Dendritic cell treated with granulocyte-macrophage colony-stimulating factor and Interleukin-4, amounts not matched to agents 40 ng/mL and 50 ng/mL, for 4 days (primary cell): ENCODE measurements at regions of chr22 and their contacts with region 1.

Region 1: DNA sequence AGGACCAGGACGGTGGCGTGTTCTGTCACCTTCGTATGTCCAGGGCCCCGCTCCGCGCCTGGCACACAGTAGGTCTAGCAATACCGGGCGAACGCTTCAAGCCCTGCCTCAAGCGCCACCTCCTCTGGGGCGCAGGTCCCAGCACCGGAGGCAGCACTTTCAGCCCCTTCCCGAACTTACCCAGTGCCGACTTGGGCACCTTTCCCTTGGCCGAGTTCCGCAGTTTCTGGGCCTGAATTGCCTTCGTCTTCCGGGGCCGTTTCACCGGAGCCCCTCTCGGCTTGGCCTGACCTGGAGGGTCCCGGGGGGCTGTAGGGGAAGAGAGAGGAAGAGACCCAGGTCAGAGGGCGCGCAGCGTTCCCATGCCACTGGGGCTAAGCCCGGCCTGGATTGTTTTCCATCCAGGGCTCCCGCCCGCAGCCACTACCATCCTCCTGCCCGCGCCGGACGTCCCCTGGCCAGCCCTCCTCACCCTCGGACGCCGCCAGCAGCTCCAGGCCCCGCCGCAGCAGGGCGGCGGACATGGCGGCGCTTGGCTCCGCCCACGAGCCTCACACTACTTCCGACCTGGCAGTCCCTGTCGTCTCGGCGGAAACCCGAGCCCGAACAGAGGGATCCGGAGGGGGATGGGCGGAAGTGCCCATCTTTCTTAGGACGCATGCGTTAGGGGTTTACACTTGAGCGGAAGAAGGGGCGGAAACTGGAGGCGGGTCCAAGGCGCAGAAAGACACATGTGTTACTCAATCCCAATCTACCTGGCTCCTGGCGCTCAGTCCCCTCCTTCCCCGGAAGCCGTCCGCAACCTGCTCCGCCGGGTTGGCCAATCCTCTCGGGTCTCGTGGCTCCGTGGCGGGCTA is at the start of gene RPS19BP1:
- H3K4me3 Mint-ChIP-seq: peak within 1 kb of the TSS; percentile 95
- H3K27ac Mint-ChIP-seq: peak within 1 kb of the TSS; percentile 95
- H3K4me1 Mint-ChIP-seq: peaks cover 57% of the 10 kb centered on the region
- H3K27me3 Mint-ChIP-seq: no peaks in the 10 kb centered on the region

Region 2: DNA sequence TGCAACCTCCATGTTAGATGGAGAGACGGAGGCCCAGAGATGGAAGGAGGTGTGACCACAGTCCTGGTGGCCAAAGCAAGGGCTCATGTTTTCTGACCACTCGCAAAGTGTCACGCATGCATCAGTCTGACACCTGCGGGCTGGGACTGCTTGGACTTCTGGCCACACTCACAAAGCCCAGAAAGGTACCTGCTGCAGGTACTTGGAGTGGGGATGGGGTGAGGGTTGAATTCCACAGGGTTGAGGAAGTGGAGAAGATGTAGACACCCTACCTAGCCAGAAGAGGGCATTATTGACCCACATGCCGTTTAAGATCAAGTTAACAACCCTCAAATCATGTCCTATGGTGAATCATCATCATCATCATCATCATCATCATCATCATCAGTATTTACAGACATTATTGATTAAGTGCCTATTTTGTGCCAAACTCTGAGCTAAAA is 39.2 kb before region 1 on chr22:
- intact Hi-C with region 1: loop called (anchors 1 kb)
- H3K4me3 Mint-ChIP-seq: no peak overlapping the region
- H3K27ac Mint-ChIP-seq: no peak overlapping the region
- H3K4me1 Mint-ChIP-seq: peaks cover 63% of the 10 kb centered on the region
- H3K27me3 Mint-ChIP-seq: no peaks in the 10 kb centered on the region

Region 3: DNA sequence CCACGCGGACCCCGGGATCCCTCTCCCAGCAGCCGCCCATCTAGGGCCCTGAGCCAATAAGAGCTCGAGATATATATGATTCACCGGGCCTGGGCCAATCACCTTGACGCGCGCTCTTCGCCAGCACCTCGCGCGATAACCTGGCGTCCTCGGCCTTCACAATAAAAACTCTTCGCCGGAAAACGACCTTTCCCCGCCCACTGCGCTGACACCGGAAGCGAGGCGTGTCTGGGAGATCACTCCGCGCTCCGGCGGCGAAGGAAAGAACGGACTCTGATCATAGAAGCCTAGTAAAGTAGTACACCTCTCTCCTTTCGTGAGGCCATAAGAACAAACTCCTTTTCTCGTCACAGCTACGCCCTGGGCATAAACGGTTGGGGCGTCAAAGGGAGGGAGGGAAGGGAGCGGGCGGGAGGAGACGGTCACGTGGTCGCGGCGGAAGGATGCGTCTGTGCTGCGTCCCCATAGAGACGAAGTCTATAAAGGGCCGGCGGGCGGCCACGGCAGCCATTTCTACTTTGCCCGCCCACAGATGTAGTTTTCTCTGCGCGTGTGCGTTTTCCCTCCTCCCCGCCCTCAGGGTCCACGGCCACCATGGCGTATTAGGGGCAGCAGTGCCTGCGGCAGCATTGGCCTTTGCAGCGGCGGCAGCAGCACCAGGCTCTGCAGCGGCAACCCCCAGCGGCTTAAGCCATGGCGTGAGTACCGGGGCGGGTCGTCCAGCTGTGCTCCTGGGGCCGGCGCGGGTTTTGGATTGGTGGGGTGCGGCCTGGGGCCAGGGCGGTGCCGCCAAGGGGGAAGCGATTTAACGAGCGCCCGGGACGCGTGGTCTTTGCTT is 12.2 kb before region 1 on chr22 and contains the start of gene ATF4:
- intact Hi-C with region 1: loop called (anchors 2 kb)
- H3K4me3 Mint-ChIP-seq: peak within 1 kb of the TSS; percentile 94
- H3K27ac Mint-ChIP-seq: peak within 1 kb of the TSS; percentile 100
- H3K4me1 Mint-ChIP-seq: peaks cover 70% of the 10 kb centered on the region
- H3K27me3 Mint-ChIP-seq: no peaks in the 10 kb centered on the region

Region 4: DNA sequence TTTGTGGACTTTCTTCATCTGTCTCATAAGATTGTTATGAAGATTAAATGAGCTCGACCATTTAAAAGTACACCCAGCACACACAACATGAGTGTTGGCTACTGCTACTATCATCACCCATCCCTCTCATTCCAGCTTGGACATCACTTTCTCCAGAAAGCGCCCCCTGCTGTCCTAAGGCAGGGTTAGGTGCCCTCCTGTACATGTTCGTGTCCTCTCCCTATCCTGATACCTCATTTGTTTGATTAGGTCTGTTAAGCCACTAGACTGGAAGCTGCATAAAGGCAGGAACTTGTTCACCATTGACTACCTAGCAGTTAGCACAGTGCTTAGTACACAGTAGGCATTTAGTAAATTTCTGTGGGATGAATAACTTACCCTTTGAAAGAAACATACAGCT is 275.6 kb after region 1 on chr22:
- intact Hi-C with region 1: loop called (anchors 5 kb)
- H3K4me3 Mint-ChIP-seq: no peak overlapping the region
- H3K27ac Mint-ChIP-seq: no peak overlapping the region
- H3K4me1 Mint-ChIP-seq: peaks cover 5% of the 10 kb centered on the region
- H3K27me3 Mint-ChIP-seq: peaks cover 70% of the 10 kb centered on the region

Region 5: GRCh38 chr22:40024201-40025061 is 492.0 kb after region 1 on chr22:
- intact Hi-C with region 1: loop called (anchors 1 kb)
- H3K4me3 Mint-ChIP-seq: no peak overlapping the region
- H3K27ac Mint-ChIP-seq: no peak overlapping the region
- H3K4me1 Mint-ChIP-seq: no peaks in the 10 kb centered on the region
- H3K27me3 Mint-ChIP-seq: peaks cover 22% of the 10 kb centered on the region

Region 6: DNA sequence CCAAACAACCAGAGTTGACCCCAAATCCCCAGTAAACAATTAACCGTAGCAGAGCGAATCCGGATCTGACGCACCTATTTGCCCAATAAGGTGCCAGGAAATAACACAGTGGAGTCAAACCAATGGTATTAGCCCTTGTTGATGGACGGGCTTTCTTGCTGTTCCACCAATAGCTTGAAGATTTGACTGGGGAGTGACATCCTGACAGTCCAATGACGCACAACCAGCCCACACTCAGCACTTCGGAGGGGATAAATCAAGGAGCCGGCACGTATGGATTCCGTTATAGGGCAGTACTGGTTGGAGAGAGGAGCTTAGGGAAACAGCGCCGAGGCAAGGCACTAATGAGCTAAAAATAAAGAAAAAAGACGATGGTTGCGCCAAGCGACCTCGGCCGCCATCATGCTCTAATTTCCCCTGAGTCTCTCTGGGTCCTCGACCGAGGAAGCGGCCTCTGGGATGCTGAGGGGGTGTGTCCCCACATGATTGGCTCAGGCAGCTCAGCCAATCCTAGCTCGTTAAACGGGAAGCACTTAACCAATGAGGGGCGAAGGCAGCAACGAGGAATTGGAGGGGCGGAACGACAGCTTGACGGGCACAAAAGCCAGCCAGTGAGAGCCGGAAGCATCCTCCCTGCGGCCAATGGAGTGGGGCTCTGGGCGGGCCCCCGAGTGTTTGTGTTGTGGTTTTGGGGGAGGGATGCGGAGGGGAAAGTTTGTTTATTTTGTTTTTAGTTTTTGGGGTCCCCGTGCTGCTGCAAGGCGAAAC is 511.8 kb after region 1 on chr22:
- intact Hi-C with region 1: loop called (anchors 5 kb)
- H3K4me3 Mint-ChIP-seq: peak overlapping the region; percentile 86
- H3K27ac Mint-ChIP-seq: peak overlapping the region; percentile 95
- H3K4me1 Mint-ChIP-seq: peaks cover 50% of the 10 kb centered on the region
- H3K27me3 Mint-ChIP-seq: peaks cover 6% of the 10 kb centered on the region

Region 7: DNA sequence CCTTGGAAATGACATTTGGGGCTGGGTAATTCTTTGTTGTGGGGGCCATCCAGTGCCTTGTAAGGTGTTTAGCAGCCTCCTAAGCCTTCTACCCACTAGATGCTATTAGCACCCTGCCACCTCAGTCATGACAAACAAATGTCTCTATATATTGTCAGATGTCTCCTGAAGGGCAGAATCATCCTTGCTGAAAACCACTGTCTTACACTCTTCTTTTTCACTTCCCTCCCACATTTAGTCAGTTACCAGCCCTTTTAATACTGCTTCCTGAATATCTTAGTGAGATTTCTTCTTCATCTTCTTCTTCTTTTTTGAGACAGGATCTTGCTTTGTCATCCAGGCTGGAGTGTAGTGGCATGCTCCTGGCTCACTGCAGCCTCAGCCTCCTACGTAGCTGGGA is 678.4 kb after region 1 on chr22:
- intact Hi-C with region 1: loop called (anchors 5 kb)
- H3K4me3 Mint-ChIP-seq: peak overlapping the region; percentile 34
- H3K27ac Mint-ChIP-seq: peak overlapping the region; percentile 88
- H3K4me1 Mint-ChIP-seq: peaks cover 69% of the 10 kb centered on the region
- H3K27me3 Mint-ChIP-seq: no peaks in the 10 kb centered on the region